SK-N-SH (cell line): ENCODE measurements at regions of chr1 and their contacts with region 1.

Region 1: DNA sequence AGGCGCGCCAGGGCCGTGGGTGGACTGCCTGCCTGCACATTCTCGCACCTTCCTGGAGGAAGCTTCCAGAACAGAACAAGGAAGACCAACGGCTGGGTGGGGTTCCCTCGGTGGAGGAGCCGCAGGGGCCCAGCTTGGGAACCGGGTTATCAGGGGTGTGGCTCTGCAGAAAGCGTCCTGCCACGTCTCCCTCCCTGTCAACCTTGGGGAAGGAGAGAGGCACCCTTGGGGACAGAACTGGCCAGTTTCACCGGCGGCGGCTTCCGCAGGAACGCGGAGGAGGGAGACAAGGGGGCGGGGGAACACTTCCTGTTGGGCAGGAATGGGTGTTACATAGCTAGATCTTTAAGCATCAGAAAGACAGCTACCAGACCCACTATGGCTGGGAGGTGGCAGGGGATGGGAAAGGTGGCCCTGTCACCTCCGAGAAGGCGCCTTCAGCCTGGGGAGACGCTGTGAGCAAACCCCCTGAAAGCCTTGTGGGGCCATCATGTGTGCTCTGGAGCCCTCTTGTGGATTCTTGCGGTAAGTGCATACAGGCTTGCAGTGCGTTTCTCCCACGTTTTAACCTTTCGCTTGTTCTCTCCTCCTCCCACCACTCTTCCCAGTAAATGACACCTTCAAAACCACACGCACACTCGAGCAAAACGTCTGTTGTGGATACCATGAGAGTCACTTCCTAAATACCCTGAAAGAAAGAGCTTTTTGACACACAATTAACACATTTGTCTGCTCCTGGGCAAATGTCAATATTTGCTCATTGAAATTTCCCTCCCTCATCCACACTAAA is 3.8 kb upstream of the PLEKHA6 start:
- DNase-seq: peak; percentile 74
- H3K4me3 ChIP-seq: peak overlapping the region; percentile 41 to 56
- H3K27ac ChIP-seq: peak overlapping the region in 1 of 2 experiments; percentile 56; a peak in 1 of 4 replicates
- H3K4me1 ChIP-seq: peaks cover 4 to 25% of the 10 kb centered on the region in 2 experiments; a peak in 1 of 4 replicates
- H3K27me3 ChIP-seq: peaks cover 7% of the 10 kb centered on the region; the same call in 1 of the 2 replicates
- CTCF ChIP-seq: peak; percentile 98
- EP300 ChIP-seq: no peak
- RAD21 ChIP-seq: peak; percentile 97

Region 2: GRCh38 chr1:204151552-204152309 is 211.8 kb before region 1 on chr1 and contains the start of gene ETNK2:
- CTCF ChIA-PET with region 1: interaction called, 302 read pairs
- POLR2A ChIA-PET with region 1: interaction called, 3 read pairs
- DNase-seq: peak; percentile 98
- H3K4me3 ChIP-seq: peak within 1 kb of the TSS; percentile 72 to 89
- H3K27ac ChIP-seq: peak within 1 kb of the TSS in 1 of 2 experiments; percentile 72; a peak in 1 of 4 replicates
- H3K4me1 ChIP-seq: peaks cover 3 to 19% of the 10 kb centered on the region in 2 experiments; a peak in 1 of 4 replicates
- H3K27me3 ChIP-seq: no peaks in the 10 kb centered on the region
- CTCF ChIP-seq: no peak
- EP300 ChIP-seq: no peak
- RAD21 ChIP-seq: no peak
- polyA plus RNA-seq, gene ETNK2: 16.1 and 20.1 TPM in 2 replicates

Region 3: DNA sequence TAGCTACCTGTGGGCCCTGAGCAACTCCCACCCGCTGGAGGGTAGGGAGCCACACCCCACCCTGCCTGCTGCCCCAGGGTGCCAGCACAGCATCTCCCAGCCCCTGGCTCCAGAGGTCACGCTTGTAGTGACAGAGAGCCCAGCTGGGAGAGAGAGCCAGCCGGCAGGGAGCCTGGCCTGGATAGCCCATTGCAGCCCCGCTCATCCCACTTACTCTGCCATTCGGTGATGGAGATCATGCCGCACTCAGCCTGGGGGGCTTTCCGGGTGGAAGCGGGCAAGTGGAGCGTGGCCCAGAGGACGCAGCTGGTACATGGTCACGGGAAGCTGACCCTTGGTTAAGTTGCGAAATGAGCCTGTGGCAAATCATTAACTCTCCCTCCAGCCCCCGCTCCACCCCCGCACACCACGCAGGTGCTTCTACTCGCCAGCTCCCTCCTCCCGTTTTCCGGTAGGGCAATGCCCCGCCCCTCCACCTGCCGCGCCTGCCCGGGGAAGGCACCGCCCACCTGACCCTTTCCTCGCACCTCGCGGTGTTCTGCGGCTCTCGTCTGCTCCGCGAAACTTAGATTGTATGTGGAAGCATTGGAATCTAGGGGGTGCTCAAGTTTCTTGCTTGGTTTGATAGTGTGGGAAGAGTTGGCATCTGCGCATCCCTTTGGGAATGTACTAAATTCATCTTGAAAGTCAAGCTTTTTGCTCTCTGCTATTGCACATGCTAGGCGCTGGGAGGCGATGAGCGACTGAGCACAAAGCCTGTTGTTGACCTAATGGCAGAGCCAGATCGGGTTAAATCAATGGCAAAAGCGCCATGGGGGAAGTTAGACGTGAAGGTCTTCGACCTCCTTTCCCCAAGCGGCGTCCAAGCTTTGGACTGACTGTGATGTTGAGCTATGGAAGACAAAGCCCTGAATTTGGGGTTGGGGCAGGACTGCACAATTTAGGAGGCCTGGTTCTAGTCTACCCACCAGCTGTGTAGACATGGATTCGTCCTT is 149.6 kb before region 1 on chr1 and contains the start of gene GOLT1A:
- CTCF ChIA-PET with region 1: interaction called, 107 read pairs
- POLR2A ChIA-PET with region 1: no interaction called
- DNase-seq: peak; percentile 65
- H3K4me3 ChIP-seq: peak within 1 kb of the TSS in 1 of 2 experiments; percentile 27; a peak in 1 of 4 replicates
- H3K27ac ChIP-seq: no peak within 1 kb of the TSS
- H3K4me1 ChIP-seq: no peaks in the 10 kb centered on the region; a peak in 1 of 4 replicates
- H3K27me3 ChIP-seq: peaks cover 18% of the 10 kb centered on the region; the same call in 1 of the 2 replicates
- CTCF ChIP-seq: peak; percentile 60
- EP300 ChIP-seq: no peak
- RAD21 ChIP-seq: peak; percentile 67
- polyA plus RNA-seq, gene GOLT1A: not detected in 2 replicates

Region 4: DNA sequence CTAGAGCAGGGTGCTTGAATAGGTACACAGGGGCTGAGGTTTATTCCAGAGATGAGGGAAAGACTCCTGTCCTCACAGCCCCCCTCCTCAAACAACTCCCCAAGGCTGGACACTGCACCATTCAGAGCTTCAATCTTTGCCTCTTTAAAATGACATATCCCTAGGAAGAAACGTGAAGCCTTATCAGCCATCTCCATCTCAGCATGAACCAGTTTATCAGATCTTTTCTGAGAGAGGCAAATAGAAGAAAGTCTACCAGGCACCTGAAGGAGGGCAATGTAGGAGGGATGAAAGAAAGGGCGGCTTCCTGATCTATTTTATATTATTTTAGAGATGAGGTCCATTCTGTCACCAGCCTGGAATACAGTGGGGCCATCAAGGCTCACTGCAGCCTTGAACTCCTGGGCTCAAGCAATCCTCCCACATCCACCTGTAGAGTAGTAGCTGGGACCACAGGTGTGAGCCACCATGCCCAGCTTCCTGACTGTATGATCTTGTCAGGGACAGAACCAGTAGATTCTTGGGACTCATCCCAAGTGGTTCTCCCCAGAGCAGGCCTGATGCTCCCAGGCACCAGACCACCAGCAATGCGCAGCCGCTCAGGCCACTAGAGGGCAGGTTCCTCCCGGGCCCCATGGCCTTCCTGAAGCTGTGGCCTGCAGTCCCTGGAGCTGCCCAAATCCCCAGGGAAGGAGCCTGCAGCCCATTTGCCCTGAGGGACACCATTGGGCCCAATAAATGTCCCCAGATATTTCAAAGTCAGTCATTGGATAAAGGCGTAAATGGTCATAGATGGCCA is 105.4 kb before region 1 on chr1:
- CTCF ChIA-PET with region 1: interaction called, 338 read pairs
- POLR2A ChIA-PET with region 1: interaction called, 29 read pairs
- DNase-seq: peak; percentile 88
- H3K4me3 ChIP-seq: no peak overlapping the region
- H3K27ac ChIP-seq: peak overlapping the region in 1 of 2 experiments; percentile 67; a peak in 2 of 4 replicates
- H3K4me1 ChIP-seq: peaks cover 0 to 28% of the 10 kb centered on the region in 2 experiments; a peak in 2 of 4 replicates
- H3K27me3 ChIP-seq: no peaks in the 10 kb centered on the region; the same call in 1 of the 2 replicates
- CTCF ChIP-seq: peak; percentile 73
- EP300 ChIP-seq: no peak
- RAD21 ChIP-seq: peak; percentile 80

Region 5: DNA sequence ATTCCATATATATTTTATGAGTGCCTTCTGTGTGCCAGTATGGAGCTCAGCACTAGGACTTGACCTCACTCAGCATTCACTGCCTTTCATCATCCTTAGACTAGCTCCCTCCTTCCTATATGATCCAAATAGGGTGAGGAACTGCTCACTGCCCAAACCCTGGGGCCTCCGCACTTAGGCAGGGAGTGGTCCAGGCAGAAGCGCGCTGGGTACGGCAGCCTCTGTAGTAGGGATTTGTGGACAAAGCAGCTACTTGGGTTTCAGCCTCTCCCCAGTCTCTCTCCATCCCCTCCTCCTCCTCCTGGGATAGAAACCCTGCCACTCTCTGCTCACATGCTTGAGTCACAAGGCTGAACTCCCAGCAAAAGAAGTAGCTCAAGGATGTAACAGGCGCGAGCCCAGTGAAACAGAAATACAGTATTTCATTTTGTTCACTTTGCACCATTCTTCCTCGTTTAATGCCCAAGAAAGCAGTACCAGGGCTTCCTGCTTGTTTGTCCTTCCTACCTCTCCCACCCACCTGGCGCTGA is 36.7 kb before region 1 on chr1:
- CTCF ChIA-PET with region 1: interaction called, 12 read pairs
- POLR2A ChIA-PET with region 1: no interaction called
- DNase-seq: no peak
- H3K4me3 ChIP-seq: no peak overlapping the region
- H3K27ac ChIP-seq: peak overlapping the region in 1 of 2 experiments; percentile 80; a peak in 2 of 4 replicates
- H3K4me1 ChIP-seq: peaks cover 0 to 37% of the 10 kb centered on the region in 2 experiments; a peak in 2 of 4 replicates
- H3K27me3 ChIP-seq: peaks cover 9% of the 10 kb centered on the region; the same call in 1 of the 2 replicates
- CTCF ChIP-seq: no peak
- EP300 ChIP-seq: no peak
- RAD21 ChIP-seq: no peak

Region 6: DNA sequence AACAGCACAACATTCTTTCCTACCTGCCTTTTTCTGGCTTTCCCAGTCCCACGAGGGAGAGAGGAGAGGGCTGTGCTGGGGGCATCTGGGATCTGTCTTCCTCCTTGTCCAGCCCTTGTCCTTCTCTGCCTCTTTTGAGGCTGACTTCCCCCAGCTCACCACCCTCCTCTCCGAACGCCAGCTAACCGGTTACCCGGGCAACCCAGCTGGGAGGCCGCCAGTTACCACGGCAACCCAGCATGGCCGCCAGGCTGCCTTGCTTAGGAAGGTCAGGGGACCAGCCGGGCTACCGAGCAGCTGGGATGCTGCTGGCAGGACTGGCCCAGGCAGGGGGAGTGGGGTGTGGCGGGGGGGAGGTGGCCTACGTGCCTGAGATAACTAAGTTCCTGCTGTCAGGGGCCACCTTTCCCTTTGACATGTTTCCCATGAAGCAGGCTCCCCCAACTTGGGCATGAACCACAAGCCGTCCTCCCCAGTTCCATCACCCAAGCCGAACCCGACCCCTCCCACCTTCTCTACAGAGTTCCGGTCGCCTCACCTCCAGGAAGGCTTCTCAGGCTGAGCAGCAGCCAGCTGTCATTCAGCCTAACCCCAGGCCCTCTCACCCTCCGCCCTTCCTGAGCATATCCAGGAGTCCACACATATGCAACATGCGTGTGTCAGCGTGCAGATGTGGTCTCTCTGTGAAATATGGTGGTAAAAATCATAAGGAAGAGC is 12.5 kb before region 1 on chr1:
- CTCF ChIA-PET with region 1: interaction called, 75 read pairs
- POLR2A ChIA-PET with region 1: interaction called, 25 read pairs
- DNase-seq: peak; percentile 90
- H3K4me3 ChIP-seq: peak overlapping the region in 1 of 2 experiments; percentile 40; a peak in 2 of 4 replicates
- H3K27ac ChIP-seq: peak overlapping the region in 1 of 2 experiments; percentile 87; a peak in 3 of 4 replicates
- H3K4me1 ChIP-seq: peaks cover 9 to 51% of the 10 kb centered on the region in 2 experiments; a peak in 2 of 4 replicates
- H3K27me3 ChIP-seq: no peaks in the 10 kb centered on the region
- CTCF ChIP-seq: no peak
- EP300 ChIP-seq: no peak
- RAD21 ChIP-seq: no peak

Region 7: GRCh38 chr1:204398217-204399081 is 34.9 kb after region 1 on chr1:
- CTCF ChIA-PET with region 1: interaction called, 89 read pairs
- POLR2A ChIA-PET with region 1: no interaction called
- DNase-seq: peak; percentile 82
- H3K4me3 ChIP-seq: no peak overlapping the region
- H3K27ac ChIP-seq: no peak overlapping the region
- H3K4me1 ChIP-seq: no peaks in the 10 kb centered on the region
- H3K27me3 ChIP-seq: no peaks in the 10 kb centered on the region
- CTCF ChIP-seq: peak; percentile 85
- EP300 ChIP-seq: no peak
- RAD21 ChIP-seq: peak; percentile 79